CD8-positive, alpha-beta memory T cell (primary cell): ENCODE measurements at regions of chr11 and their contacts with region 1.

Region 1: DNA sequence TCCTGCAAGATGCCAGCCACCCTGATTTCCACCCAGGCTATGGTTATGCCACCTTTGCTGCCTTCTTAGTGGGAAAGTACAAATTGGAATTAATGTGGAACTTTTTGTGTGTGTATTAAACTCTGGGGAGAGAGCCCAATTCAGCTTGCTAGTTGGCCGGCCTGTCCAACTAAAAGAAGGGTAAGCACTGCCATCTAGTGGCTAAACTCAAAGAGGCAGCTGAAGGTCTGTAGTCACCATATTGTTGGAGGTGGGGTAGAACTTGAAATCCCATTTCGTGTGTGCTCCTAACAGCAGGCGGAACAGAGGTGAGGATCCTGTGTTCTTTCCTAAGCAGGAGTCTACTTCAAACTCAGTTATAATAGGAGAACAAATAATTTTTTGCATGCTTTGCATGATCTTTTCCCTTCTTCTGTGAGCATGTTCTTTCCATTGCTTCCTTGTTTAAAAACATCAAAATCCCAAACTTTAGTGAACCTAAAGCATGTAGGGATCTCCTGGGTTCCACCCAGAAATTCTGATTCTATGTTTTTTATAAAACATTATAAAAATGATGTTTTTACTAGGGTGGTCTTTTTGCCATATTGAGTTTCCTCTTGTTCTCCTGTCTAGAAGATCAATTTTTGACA is 138.8 kb upstream of the SORL1-AS1 start:
- DNase-seq: peak; percentile 47 to 72 (median 65)
- H3K4me3 ChIP-seq: no peak overlapping the region
- H3K4me3 Mint-ChIP-seq: no peak overlapping the region
- H3K27ac ChIP-seq: no peak overlapping the region
- H3K27ac Mint-ChIP-seq: peak overlapping the region in 7 of 8 donors; percentile 44 to 76 (median 54)
- H3K4me1 ChIP-seq: no peaks in the 10 kb centered on the region
- H3K4me1 Mint-ChIP-seq: peaks cover 0 to 5% (median 5%) of the 10 kb centered on the region in 3 donors
- H3K27me3 ChIP-seq: no peaks in the 10 kb centered on the region
- H3K27me3 Mint-ChIP-seq: no peaks in the 10 kb centered on the region

Region 2: GRCh38 chr11:121246021-121246768 is 345.3 kb before region 1 on chr11:
- CTCF ChIA-PET with region 1: interaction called, 14 read pairs
- POLR2A ChIA-PET with region 1: interaction called, 3 read pairs
- DNase-seq: no peak
- H3K4me3 ChIP-seq: no peak overlapping the region
- H3K4me3 Mint-ChIP-seq: no peak overlapping the region
- H3K27ac ChIP-seq: no peak overlapping the region
- H3K27ac Mint-ChIP-seq: no peak overlapping the region
- H3K4me1 ChIP-seq: no peaks in the 10 kb centered on the region
- H3K4me1 Mint-ChIP-seq: peaks cover 0 to 5% (median 4%) of the 10 kb centered on the region in 3 donors
- H3K27me3 ChIP-seq: no peaks in the 10 kb centered on the region
- H3K27me3 Mint-ChIP-seq: peaks cover 2 to 9% of the 10 kb centered on the region in 2 donors

Region 3: DNA sequence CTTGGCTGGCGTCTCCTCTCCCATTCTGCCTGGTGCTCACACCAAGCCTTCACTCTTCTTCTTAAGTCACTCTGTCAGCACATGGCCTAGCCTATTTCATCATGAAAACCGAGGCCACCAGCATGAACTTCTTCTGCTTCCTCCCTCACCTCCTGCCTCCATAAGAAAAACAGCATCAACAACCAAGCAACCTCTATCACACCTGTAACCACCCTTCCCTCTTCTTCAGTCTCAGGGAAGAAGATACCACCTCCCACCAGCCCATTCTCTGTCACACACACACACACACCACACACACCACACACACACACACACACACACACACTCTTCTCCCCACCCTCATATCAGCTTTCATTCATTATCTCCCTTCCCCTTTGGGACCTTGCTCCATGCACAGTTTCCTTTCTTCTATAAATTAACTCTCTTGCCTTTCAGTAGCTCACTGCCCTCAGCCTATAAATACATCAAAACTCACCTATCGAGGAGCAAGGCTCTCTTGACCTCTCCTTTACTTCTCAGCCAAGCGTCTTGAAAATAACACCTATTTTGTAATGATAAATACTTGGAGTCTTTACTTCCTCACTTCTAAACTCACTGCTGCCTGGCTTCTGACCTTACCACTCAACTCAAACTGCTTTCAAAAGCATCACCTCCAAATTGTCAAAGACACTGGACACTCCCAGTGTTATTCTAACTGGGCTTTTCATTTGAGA is 262.4 kb before region 1 on chr11:
- CTCF ChIA-PET with region 1: interaction called, 10 read pairs
- POLR2A ChIA-PET with region 1: no interaction called
- DNase-seq: peak in 2 of 5 donors; percentile 6 to 14
- H3K4me3 ChIP-seq: no peak overlapping the region
- H3K4me3 Mint-ChIP-seq: no peak overlapping the region
- H3K27ac ChIP-seq: no peak overlapping the region
- H3K27ac Mint-ChIP-seq: no peak overlapping the region
- H3K4me1 ChIP-seq: peaks cover 19% of the 10 kb centered on the region
- H3K4me1 Mint-ChIP-seq: peaks cover 0 to 8% (median 1%) of the 10 kb centered on the region in 3 donors
- H3K27me3 ChIP-seq: no peaks in the 10 kb centered on the region
- H3K27me3 Mint-ChIP-seq: peaks cover 3 to 12% of the 10 kb centered on the region in 2 donors

Region 4: DNA sequence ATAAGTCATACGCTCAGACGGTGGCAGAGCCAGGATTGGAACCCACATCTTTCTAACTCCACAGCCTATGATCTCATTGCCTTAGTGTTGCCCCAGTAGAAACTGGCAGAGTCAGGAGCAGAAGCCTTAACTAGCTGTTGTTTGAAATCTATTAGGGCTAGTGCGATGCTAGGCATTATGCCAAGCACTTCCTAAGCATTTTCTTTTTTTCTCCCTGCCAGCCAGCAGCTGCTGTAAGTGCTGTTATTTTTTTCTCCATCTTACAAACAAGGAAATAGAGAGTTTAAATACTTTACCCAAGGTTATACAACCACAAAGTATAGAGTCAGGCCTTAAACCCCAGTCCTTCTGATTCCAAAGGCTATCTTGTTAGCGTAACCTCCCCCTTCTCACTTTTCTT is 22.2 kb after region 1 on chr11:
- CTCF ChIA-PET with region 1: no interaction called
- POLR2A ChIA-PET with region 1: no interaction called
- DNase-seq: no peak
- H3K4me3 ChIP-seq: no peak overlapping the region
- H3K4me3 Mint-ChIP-seq: no peak overlapping the region
- H3K27ac ChIP-seq: no peak overlapping the region
- H3K27ac Mint-ChIP-seq: peak overlapping the region in 2 of 8 donors; percentile 6 to 58
- H3K4me1 ChIP-seq: no peaks in the 10 kb centered on the region
- H3K4me1 Mint-ChIP-seq: no peaks in the 10 kb centered on the region
- H3K27me3 ChIP-seq: no peaks in the 10 kb centered on the region
- H3K27me3 Mint-ChIP-seq: peaks cover 0 to 3% of the 10 kb centered on the region in 2 donors